Breast epithelium (tissue), 4 donors: ENCODE measurements at regions of chr14 and their contacts with region 1.

Region 1: GRCh38 chr14:70622111-70622712 is 19.5 kb upstream of the TTC9 start:
- DNase-seq: no peak
- H3K4me3 ChIP-seq: no peak overlapping the region
- H3K27ac ChIP-seq: no peak overlapping the region
- H3K4me1 ChIP-seq: no peaks in the 10 kb centered on the region
- H3K27me3 ChIP-seq: no peaks in the 10 kb centered on the region
- CTCF ChIP-seq: peak; percentile 30 to 86 (median 79)
- POLR2A ChIP-seq: no peak

Region 2: DNA sequence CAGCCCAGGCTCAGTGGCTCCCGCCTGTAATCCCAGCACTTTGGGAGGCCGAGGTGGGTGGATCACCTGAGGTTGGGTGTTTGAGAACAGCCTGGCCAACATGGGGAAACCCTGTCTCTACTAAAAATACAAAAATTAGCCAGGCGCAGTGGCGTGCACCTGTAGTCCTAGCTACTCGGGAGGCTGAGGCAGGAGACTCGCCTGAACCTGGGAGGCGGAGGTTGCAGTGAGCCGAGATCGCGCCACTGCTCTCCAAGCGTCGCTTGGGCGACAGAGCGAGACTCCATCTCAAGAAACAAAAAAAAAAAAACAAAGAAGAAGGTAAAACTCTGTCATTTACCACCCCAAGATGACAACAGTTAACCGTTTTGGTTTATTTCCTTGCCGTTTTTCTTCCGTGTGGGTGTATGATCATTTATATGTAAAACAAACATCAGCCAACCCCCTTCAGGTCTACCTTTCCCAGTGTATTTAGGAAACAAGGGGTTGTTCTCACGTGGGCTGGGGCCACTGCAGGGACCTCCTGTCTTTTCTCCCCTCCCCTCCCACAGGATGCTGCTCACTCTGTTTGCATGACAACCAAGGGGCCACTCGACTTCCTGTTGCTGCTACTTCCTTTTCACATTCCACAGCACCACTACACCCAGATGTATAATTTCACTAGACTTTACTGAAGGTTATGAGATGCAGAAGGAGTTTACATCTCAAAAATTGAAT is 33.1 kb after region 1 on chr14:
- intact Hi-C with region 1: no loop called
- DNase-seq: no peak
- H3K4me3 ChIP-seq: no peak overlapping the region
- H3K27ac ChIP-seq: no peak overlapping the region
- H3K4me1 ChIP-seq: no peaks in the 10 kb centered on the region
- H3K27me3 ChIP-seq: no peaks in the 10 kb centered on the region
- CTCF ChIP-seq: no peak
- POLR2A ChIP-seq: no peak

Region 3: GRCh38 chr14:70714055-70714621 is 91.9 kb after region 1 on chr14:
- intact Hi-C with region 1: loop called (anchors 10 kb)
- DNase-seq: no peak
- H3K4me3 ChIP-seq: no peak overlapping the region
- H3K27ac ChIP-seq: no peak overlapping the region
- H3K4me1 ChIP-seq: no peaks in the 10 kb centered on the region
- H3K27me3 ChIP-seq: no peaks in the 10 kb centered on the region
- CTCF ChIP-seq: peak; percentile 46 to 80 (median 57)
- POLR2A ChIP-seq: no peak